Activated CD4-positive, alpha-beta T cell treated with anti-CD3 and anti-CD28 coated beads, Interleukin-2, amount 10 ng/mL, durations not matched to agents 24 days and 14 days (primary cell): ENCODE measurements at regions of chr6 and their contacts with region 1.

Region 1: DNA sequence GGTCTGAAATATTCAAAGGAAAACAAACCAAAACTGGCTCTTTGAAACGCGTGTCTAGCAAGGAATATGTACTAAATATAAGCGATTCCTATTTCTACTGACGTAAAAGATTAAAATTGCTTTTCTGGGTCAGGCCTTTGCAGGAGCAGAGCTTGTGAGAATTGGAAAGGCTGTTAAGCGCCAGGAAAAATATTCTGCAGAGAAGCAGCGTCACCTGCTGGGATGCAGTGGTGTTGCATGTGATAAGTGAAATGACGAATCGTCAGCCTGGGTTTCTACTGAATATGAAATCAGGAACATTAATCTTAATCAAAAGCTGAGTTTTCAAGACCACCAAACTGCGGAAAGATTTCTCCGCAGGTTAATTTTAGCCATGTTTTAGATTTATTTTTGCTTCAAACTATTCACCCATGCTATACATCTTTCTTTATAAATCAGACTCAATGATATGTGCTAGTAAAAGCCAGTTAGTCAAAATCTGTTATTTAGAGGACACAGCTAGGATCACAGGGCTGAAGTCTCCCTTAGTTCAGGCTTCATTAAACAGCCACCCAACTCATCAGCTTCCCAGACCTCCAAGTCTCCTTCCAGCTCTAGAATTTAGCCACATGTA is 67.4 kb downstream of the ALDH8A1 start:
- DNase-seq: peak; percentile 86
- H3K4me3 Mint-ChIP-seq: no peak overlapping the region
- H3K27ac Mint-ChIP-seq: no peak overlapping the region
- H3K4me1 Mint-ChIP-seq: no peaks in the 10 kb centered on the region
- H3K27me3 Mint-ChIP-seq: peaks cover 23% of the 10 kb centered on the region

Region 2: DNA sequence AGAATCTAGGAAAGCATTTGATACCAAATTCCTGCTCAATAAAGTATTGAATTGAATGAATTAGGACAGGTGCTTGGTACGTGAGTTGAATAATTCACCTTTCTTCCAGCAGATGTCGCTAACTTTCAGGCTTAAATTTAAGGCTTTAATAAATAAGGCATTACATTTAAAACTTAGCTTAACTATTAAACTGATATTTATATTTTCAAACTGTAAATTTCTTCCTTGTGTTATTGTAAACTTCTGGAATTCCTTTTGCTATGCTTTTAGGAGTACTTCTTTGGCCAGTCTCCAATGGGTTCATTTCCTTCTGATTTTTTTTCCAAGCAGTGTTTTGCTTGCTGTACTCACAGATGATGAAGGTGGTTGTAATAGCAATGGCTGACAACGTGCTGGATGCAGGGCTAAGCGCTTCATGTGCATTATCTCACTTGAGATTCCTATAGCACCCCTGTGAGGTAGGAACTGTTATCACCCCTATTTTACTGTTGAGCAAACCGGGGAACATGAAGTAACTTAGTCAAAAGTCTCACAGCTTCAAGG is 758.8 kb before region 1 on chr6:
- intact Hi-C with region 1: loop called (anchors 1 kb)
- DNase-seq: peak; percentile 72
- H3K4me3 Mint-ChIP-seq: no peak overlapping the region
- H3K27ac Mint-ChIP-seq: peak overlapping the region; percentile 53
- H3K4me1 Mint-ChIP-seq: no peaks in the 10 kb centered on the region
- H3K27me3 Mint-ChIP-seq: peaks cover 9% of the 10 kb centered on the region

Region 3: GRCh38 chr6:134161036-134161435 is 721.5 kb before region 1 on chr6:
- intact Hi-C with region 1: loop called (anchors 1 kb)
- DNase-seq: no peak
- H3K4me3 Mint-ChIP-seq: no peak overlapping the region
- H3K27ac Mint-ChIP-seq: no peak overlapping the region
- H3K4me1 Mint-ChIP-seq: no peaks in the 10 kb centered on the region
- H3K27me3 Mint-ChIP-seq: peaks cover 2% of the 10 kb centered on the region